ENCODE measurements at regions of chr3 and their contacts with region 1.

Region 1: DNA sequence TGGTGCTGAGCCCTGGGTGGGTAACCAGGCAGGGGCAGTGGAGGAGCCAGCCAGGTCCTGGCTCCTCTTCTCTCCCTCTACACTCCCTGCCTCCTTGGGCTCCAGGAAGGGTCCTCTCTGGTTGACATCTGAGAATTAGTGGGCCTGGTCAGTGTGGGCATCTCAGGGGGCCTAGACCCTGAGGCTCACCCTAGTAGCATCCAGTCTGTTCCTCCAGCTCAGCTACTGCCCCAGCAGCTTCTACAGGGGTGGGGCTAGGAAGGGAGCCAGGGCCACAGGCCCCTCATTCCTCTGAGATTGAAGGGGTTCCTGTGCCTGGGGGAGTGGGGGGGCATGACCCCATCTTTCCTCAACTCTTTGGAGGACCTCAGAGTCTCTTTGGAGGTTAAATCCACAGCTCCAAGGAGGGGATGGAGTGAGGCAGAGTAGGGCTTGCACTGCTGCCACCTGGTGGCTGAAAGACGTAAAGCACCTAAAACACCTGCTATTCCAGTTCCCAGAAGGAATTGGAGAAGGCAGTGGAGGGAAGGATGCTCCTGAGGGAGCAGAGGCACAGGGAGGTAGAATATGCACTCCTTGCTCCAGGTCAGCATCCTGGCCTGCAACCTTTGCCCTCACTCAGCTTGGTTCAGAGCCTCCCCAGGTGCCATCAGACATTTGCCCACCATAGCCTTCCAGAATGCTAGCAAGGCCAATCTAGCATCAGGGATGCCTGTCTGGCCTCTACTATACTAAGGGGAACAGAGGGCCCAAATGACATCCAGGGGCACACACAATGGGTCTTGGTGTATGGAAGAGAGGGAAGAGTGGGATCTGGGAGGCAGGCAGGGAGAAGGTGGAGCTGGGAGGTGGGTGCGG is 25.1 kb downstream of the C3orf18 start:
- DNase-seq: peak; percentile 67 to 79 (median 70)
- ATAC-seq: peak; percentile 47
- H3K4me3 ChIP-seq: no peak overlapping the region
- H3K27ac ChIP-seq: no peak overlapping the region
- H3K4me1 ChIP-seq: peaks cover 30 to 43% of the 10 kb centered on the region in 2 experiments
- H3K27me3 ChIP-seq: no peaks in the 10 kb centered on the region
- CTCF ChIP-seq: peak; percentile 78
- EP300 ChIP-seq: no peak
- POLR2A ChIP-seq: no peak
- RAD21 ChIP-seq: peak; percentile 64 to 87

Region 2: DNA sequence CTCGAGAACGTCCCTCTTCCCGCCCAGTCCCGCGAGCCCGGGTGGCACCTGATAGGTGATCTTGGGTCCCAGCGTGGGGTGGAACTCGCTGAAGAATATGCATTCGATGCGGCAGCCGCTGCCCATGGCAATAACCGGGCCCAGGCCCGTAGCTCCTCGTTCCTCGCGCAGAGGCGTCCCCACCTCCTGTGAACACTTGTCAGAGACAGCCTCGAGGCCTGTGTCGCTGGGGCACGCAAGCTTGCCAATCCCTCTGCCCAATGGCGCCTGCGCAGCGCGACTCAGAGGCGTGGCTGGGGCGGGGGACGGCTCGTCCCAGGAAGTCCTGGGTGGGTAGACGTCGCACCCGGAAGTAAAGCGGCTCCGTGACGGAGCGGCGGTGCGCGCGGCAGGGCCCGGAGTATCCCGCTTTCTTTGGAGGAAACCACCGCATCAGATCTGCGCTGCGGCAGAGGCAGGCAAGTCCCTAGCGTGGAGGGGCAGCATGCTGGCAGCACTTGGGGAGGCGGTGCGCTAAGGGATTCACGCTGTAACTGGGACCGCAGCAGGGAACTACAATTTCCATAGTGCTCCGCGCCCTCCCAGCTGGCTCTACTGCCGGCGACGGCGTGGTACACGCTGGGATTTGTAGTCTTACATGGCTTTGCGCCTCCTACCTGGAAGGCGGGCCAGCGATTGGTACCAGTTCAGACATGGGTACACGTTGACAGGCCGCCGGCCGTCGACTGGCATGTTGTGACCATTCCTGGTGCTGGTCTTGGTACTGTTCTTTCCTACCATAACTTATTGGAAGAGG is 191.7 kb before region 1 on chr3 and contains the starts of genes CYB561D2 and NPRL2:
- CTCF ChIA-PET with region 1: interaction called, 4 read pairs
- POLR2A ChIA-PET with region 1: no interaction called
- in situ Hi-C with region 1: no loop called
- intact Hi-C with region 1: loop called (anchors 5 kb)
- DNase-seq: peak; percentile 85 to 90 (median 89)
- ATAC-seq: peak; percentile 97
- H3K4me3 ChIP-seq: peak within 1 kb of the TSS; percentile 72
- H3K27ac ChIP-seq: peak within 1 kb of the TSS; percentile 77
- H3K4me1 ChIP-seq: peaks cover 13 to 43% of the 10 kb centered on the region in 2 experiments; a peak in 4 of 5 replicates
- H3K27me3 ChIP-seq: no peaks in the 10 kb centered on the region
- CTCF ChIP-seq: no peak
- EP300 ChIP-seq: no peak
- POLR2A ChIP-seq: peak; percentile 71
- RAD21 ChIP-seq: no peak
- polyA plus RNA-seq, gene CYB561D2: 4.2 to 9.1 TPM
- polyA plus RNA-seq, gene NPRL2: 27.5 to 40.4 TPM

Region 3: DNA sequence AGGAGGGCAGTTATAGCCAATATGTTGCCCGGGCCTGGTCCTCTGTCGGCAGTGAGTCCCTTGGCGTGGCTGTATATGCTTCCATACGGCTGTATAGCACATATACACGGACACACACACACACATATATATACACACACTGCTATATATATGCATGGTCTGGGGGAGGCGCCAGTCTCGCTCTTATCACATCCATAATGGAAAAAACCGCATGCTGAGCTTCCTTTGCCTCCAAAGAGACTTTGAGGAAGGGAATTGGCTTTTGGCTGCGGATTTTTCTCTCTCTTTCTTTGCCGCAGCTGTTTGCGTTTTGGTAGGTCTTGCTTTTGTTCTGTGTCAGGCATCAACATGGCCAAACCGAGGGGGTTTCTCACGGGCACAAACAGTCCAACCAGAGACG is 171.8 kb before region 1 on chr3:
- CTCF ChIA-PET with region 1: interaction called, 10 read pairs
- POLR2A ChIA-PET with region 1: no interaction called
- in situ Hi-C with region 1: no loop called
- intact Hi-C with region 1: loop called (anchors 5 kb)
- DNase-seq: peak in 2 of 4 experiments; percentile 49 to 73
- ATAC-seq: peak; percentile 84
- H3K4me3 ChIP-seq: no peak overlapping the region
- H3K27ac ChIP-seq: no peak overlapping the region
- H3K4me1 ChIP-seq: peaks cover 13 to 44% of the 10 kb centered on the region in 2 experiments; a peak in 4 of 5 replicates
- H3K27me3 ChIP-seq: no peaks in the 10 kb centered on the region
- CTCF ChIP-seq: peak; percentile 46 to 72 (median 55)
- EP300 ChIP-seq: no peak
- POLR2A ChIP-seq: no peak
- RAD21 ChIP-seq: peak; percentile 70 to 74

Region 4: GRCh38 chr3:50436114-50436674 is 106.2 kb before region 1 on chr3:
- CTCF ChIA-PET with region 1: interaction called, 4 read pairs
- POLR2A ChIA-PET with region 1: interaction called, 3 read pairs
- in situ Hi-C with region 1: no loop called
- intact Hi-C with region 1: loop called (anchors 5 kb)
- DNase-seq: peak; percentile 73 to 83 (median 82)
- ATAC-seq: peak; percentile 98
- H3K4me3 ChIP-seq: no peak overlapping the region
- H3K27ac ChIP-seq: no peak overlapping the region
- H3K4me1 ChIP-seq: peaks cover 5 to 13% of the 10 kb centered on the region in 2 experiments; a peak in 4 of 5 replicates
- H3K27me3 ChIP-seq: peaks cover 0 to 8% of the 10 kb centered on the region in 2 experiments; a peak in 2 of 5 replicates
- CTCF ChIP-seq: peak; percentile 78 to 85 (median 78)
- EP300 ChIP-seq: no peak
- POLR2A ChIP-seq: no peak
- RAD21 ChIP-seq: peak; percentile 49 to 86

Region 5: DNA sequence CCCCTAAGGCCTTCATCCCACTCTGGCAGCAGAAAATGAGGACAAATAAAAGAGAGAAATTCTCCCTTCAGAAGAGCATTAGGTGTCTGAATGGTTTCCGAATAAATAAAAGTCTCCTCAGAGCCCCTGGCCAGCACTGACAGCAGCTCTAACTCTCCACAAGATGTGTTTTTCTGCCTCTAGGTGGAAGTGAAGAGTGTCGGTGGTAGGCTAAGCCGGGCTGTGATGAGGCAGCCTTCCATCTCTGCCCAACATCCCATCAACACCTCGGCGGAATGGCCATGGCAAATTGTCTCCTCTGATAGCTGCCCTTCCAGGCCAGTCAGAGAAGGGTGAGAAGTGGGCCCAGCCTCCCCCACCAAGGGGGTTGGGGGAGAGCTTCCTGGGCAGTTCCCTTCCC is 32.7 kb before region 1 on chr3:
- CTCF ChIA-PET with region 1: no interaction called
- POLR2A ChIA-PET with region 1: no interaction called
- in situ Hi-C with region 1: loop called (anchors 5 kb)
- intact Hi-C with region 1: no loop called
- DNase-seq: no peak
- ATAC-seq: 0 out of 3 replicates have a peak, but pooled peaks have one; percentile 51
- H3K4me3 ChIP-seq: no peak overlapping the region
- H3K27ac ChIP-seq: no peak overlapping the region
- H3K4me1 ChIP-seq: no peaks in the 10 kb centered on the region; a peak in 1 of 5 replicates
- H3K27me3 ChIP-seq: peaks cover 5 to 73% of the 10 kb centered on the region in 2 experiments; a peak in 3 of 5 replicates
- CTCF ChIP-seq: no peak
- EP300 ChIP-seq: no peak
- POLR2A ChIP-seq: no peak
- RAD21 ChIP-seq: no peak

Region 6: DNA sequence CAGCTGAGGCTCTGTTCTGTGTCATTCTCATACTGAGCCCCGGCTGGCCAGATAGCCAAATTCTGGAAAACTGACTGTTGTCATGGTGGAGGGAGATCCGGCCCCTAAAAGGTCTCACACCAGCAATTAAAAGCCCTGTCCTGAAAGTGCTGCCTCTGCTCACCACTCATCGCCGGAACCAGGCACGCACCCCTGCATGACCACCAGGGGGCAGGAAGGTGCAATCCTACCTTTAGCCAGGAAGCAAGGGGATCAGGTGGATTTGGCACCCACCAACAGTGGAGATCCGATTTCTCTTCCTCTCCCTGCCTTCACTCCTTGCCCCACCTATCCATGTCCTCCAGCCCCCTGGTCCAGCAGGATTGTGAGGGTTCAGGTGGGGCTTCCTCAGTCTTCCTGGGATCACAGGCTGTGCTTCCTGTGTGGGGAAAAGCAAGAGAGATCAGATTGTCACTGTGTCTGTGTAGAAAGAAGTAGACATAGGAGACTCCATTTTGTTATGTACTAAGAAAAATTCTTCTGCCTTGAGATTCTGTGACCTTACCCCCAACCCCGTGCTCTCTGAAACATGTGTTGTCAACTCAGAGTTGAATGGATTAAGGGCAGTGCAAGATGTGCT is 22.8 kb before region 1 on chr3:
- CTCF ChIA-PET with region 1: interaction called, 11 read pairs
- POLR2A ChIA-PET with region 1: no interaction called
- in situ Hi-C with region 1: loop called (anchors 5 kb)
- intact Hi-C with region 1: loop called (anchors 1 kb)
- DNase-seq: peak; percentile 71 to 80 (median 74)
- ATAC-seq: peak; percentile 93
- H3K4me3 ChIP-seq: no peak overlapping the region
- H3K27ac ChIP-seq: no peak overlapping the region
- H3K4me1 ChIP-seq: peaks cover 0 to 14% of the 10 kb centered on the region in 2 experiments; a peak in 3 of 5 replicates
- H3K27me3 ChIP-seq: peaks cover 0 to 4% of the 10 kb centered on the region in 2 experiments; a peak in 2 of 5 replicates
- CTCF ChIP-seq: peak; percentile 86 to 90 (median 87)
- EP300 ChIP-seq: no peak
- POLR2A ChIP-seq: no peak
- RAD21 ChIP-seq: peak; percentile 77 to 90

Measured in K562 (cell line).